ENCODE measurements at regions of chr1 and their contacts with region 1.

Region 1: GRCh38 chr1:161921990-161922389 is 101.7 kb downstream of the OLFML2B start:
- DNase-seq: no peak
- ATAC-seq: no peak
- H3K4me3 ChIP-seq: no peak overlapping the region
- H3K4me3 Mint-ChIP-seq: peak overlapping the region; percentile 25
- H3K27ac ChIP-seq: no peak overlapping the region
- H3K27ac Mint-ChIP-seq: peak overlapping the region; percentile 21
- H3K4me1 ChIP-seq: no peaks in the 10 kb centered on the region
- H3K4me1 Mint-ChIP-seq: peaks cover 67% of the 10 kb centered on the region
- H3K27me3 ChIP-seq: no peaks in the 10 kb centered on the region
- H3K27me3 Mint-ChIP-seq: no peaks in the 10 kb centered on the region
- CTCF ChIP-seq: no peak

Region 2: GRCh38 chr1:161772397-161772796 is 149.6 kb before region 1 on chr1:
- CTCF ChIA-PET with region 1: no interaction called
- POLR2A ChIA-PET with region 1: no interaction called
- intact Hi-C with region 1: loop called in 1 of 2 experiments (anchors 10 kb)
- DNase-seq: peak in 2 of 14 experiments; percentile 19 to 26
- ATAC-seq: peak; percentile 37
- H3K4me3 ChIP-seq: peak overlapping the region; percentile 1
- H3K4me3 Mint-ChIP-seq: no peak overlapping the region
- H3K27ac ChIP-seq: peak overlapping the region; percentile 24 to 55
- H3K27ac Mint-ChIP-seq: no peak overlapping the region
- H3K4me1 ChIP-seq: peaks cover 54% of the 10 kb centered on the region
- H3K4me1 Mint-ChIP-seq: peaks cover 11% of the 10 kb centered on the region
- H3K27me3 ChIP-seq: no peaks in the 10 kb centered on the region
- H3K27me3 Mint-ChIP-seq: no peaks in the 10 kb centered on the region
- CTCF ChIP-seq: no peak

Region 3: DNA sequence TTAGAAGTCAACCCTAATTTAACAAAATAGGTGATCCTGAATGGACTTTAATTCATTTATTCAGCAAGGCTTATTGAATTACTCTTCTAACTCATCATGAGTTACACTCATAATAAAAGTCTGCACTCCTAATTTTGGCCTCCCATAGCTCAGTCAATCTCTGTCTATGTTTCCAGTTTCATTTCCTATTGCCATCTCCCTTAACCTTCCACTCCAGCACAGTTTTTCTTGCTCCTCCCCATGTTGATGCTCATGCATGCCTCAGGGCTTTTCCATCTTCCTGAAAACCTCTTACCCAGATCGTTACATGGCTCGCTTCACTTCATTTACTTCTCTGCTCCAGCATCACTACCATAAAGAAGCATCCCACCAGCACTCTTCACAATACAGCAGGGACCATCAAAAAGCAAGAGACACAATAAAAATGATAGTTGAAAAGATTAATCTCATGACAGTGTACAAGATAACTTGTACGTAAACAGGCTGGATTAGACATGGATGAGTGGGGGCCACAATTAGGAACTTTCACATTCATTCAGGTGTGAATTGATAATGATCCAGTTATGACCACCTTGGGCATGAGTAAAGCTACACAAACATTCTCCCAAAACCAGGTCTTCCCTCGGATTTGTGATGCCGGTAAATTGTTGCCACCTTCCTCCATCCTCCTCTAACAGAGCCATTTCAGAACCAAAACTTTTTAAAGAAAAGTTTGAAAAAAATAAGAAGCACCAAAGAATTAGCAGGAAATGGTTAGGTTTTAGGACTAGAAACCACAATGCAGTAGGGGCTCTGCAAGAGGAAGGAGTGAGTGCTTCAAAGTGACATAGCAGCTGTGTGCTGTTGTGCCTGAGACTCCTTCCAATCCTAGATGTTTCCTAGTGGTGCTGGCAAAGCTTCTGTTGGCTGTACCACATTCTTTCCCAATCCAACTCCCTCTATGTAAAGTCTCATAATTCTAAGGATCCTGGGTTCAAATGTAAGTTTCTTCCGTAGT is 11.9 kb after region 1 on chr1:
- CTCF ChIA-PET with region 1: interaction called, 3 read pairs
- POLR2A ChIA-PET with region 1: interaction called, 15 read pairs
- intact Hi-C with region 1: no loop called
- DNase-seq: peak in 6 of 14 experiments; percentile 3 to 75 (median 34)
- ATAC-seq: peak; percentile 86
- H3K4me3 ChIP-seq: peak overlapping the region; percentile 13
- H3K4me3 Mint-ChIP-seq: peak overlapping the region; percentile 35
- H3K27ac ChIP-seq: peak overlapping the region in 1 of 2 donors; percentile 42
- H3K27ac Mint-ChIP-seq: peak overlapping the region; percentile 79
- H3K4me1 ChIP-seq: peaks cover 23% of the 10 kb centered on the region
- H3K4me1 Mint-ChIP-seq: peaks cover 68% of the 10 kb centered on the region
- H3K27me3 ChIP-seq: no peaks in the 10 kb centered on the region
- H3K27me3 Mint-ChIP-seq: no peaks in the 10 kb centered on the region
- CTCF ChIP-seq: no peak